Activated CD8-positive, alpha-beta T cell treated with anti-CD3 and anti-CD28 coated beads, Interleukin-2, amount 10 ng/mL, durations not matched to agents 7 days and 5 days (primary cell): ENCODE measurements at regions of chr5 and their contacts with region 1.

Region 1: GRCh38 chr5:35881758-35882157 is 25.1 kb downstream of the IL7R start:
- DNase-seq: no peak
- ATAC-seq: no peak
- H3K4me3 Mint-ChIP-seq: no peak overlapping the region
- H3K27ac Mint-ChIP-seq: no peak overlapping the region
- H3K4me1 Mint-ChIP-seq: peaks cover 58% of the 10 kb centered on the region
- H3K27me3 Mint-ChIP-seq: no peaks in the 10 kb centered on the region

Region 2: DNA sequence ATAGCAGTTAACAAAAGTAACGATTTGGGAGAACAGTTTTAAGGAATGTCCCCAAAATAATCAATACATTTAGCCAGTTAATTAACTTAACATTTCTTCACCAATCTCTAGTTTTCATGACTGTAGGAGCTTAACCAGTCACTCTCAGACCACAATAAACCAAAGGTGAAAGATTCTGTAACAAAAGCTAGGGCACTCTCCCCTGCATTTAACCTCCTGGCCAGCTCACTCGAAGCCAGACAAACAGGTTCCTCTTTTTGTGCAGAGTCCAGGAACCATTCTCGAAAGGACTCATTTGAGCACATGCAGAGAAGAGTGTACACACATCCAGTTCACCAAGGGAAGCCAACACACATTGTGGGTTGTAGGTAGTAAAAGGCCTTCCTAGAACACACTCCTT is 18.6 kb before region 1 on chr5:
- CTCF ChIA-PET with region 1: interaction called, 15 read pairs
- POLR2A ChIA-PET with region 1: interaction called, 8 read pairs
- DNase-seq: no peak
- ATAC-seq: peak; percentile 29
- H3K4me3 Mint-ChIP-seq: peak overlapping the region; percentile 41
- H3K27ac Mint-ChIP-seq: peak overlapping the region; percentile 41
- H3K4me1 Mint-ChIP-seq: peaks cover 74% of the 10 kb centered on the region
- H3K27me3 Mint-ChIP-seq: no peaks in the 10 kb centered on the region

Region 3: GRCh38 chr5:36202521-36202961 is 320.8 kb after region 1 on chr5:
- CTCF ChIA-PET with region 1: no interaction called
- POLR2A ChIA-PET with region 1: no interaction called
- DNase-seq: no peak
- ATAC-seq: no peak
- H3K4me3 Mint-ChIP-seq: no peak overlapping the region
- H3K27ac Mint-ChIP-seq: no peak overlapping the region
- H3K4me1 Mint-ChIP-seq: no peaks in the 10 kb centered on the region
- H3K27me3 Mint-ChIP-seq: no peaks in the 10 kb centered on the region